ENCODE measurements at regions of chr4 and their contacts with region 1.

Region 1: DNA sequence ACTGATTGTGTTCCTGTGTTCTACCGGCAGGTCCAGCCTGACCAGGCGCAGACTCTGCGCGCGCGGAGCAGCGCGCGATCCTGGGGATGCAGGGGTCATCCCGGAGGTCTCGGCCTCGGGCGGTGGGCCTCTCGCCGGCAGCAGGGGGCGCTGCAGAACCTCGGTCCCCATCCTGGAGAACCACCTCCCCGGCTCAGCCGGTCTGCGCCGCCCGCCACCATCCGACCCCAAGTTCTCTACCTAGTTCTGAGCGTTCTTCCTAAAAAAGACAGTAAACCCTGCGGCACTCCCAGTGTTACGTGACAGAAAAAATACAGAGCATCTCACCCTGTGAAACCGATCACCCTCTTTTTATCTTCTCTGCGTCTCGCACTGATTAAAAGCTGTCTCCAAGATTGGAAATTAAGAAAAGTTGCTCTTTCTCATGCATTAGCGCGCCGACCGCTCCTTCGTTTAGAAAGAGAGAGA is 1.6 kb downstream of the TRPC3 start:
- DNase-seq: peak; percentile 91
- ATAC-seq: peak; percentile 89
- H3K4me3 Mint-ChIP-seq: peak overlapping the region; percentile 86
- H3K27ac Mint-ChIP-seq: no peak overlapping the region
- H3K4me1 Mint-ChIP-seq: peaks cover 9% of the 10 kb centered on the region
- H3K27me3 Mint-ChIP-seq: peaks cover 43% of the 10 kb centered on the region
- CTCF ChIP-seq: peak; percentile 81

Region 2: DNA sequence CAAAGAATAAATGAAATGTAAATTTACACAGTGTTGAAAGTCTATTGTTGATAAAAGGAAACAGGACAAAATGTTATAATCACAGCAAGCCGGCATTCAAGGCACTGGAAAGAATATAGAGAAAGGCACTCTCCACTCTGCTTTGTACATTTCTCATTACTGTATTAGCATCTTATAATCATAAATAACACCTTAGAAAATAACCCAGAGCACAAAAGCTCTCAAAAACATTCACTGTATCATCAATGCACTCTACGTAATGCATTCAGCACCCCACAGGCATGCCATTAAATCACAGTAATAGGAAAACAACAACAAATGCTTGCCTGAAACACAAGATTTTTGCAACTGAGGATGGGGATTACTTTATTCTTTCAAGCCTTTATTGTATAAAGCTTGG is 77.0 kb after region 1 on chr4:
- CTCF ChIA-PET with region 1: no interaction called
- POLR2A ChIA-PET with region 1: no interaction called
- intact Hi-C with region 1: no loop called
- DNase-seq: no peak
- ATAC-seq: no peak
- H3K4me3 Mint-ChIP-seq: no peak overlapping the region
- H3K27ac Mint-ChIP-seq: no peak overlapping the region
- H3K4me1 Mint-ChIP-seq: no peaks in the 10 kb centered on the region
- H3K27me3 Mint-ChIP-seq: peaks cover 3% of the 10 kb centered on the region
- CTCF ChIP-seq: no peak

Region 3: GRCh38 chr4:122151982-122152710 is 201.9 kb after region 1 on chr4 and contains the start of gene BLTP1:
- CTCF ChIA-PET with region 1: no interaction called
- POLR2A ChIA-PET with region 1: no interaction called
- intact Hi-C with region 1: loop called (anchors 5 kb)
- DNase-seq: peak; percentile 87
- ATAC-seq: peak; percentile 94
- H3K4me3 Mint-ChIP-seq: peak within 1 kb of the TSS; percentile 81
- H3K27ac Mint-ChIP-seq: peak within 1 kb of the TSS; percentile 95
- H3K4me1 Mint-ChIP-seq: peaks cover 55% of the 10 kb centered on the region
- H3K27me3 Mint-ChIP-seq: no peaks in the 10 kb centered on the region
- CTCF ChIP-seq: no peak
- total RNA-seq, gene BLTP1: 17.9 to 19.0 TPM

Region 4: DNA sequence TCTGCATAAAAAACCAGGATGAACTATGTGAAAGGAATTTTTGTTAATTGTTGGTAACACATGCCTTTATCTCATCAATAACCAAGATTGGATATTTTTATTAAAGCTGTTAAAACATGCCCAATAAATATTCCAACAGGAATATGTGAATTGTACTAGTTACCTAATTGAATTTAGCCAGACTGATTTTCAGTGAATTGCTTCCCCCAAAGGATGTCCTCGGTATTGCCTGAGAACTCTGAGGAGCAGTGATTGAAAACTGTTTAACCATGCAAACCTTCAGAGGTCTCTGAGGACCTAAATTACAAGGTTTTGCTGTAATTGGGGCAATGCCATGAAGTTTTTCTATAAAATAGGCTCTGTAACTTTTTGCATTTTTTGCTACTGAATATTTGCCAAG is 268.5 kb after region 1 on chr4:
- CTCF ChIA-PET with region 1: interaction called, 12 read pairs
- POLR2A ChIA-PET with region 1: no interaction called
- intact Hi-C with region 1: no loop called
- DNase-seq: no peak
- ATAC-seq: no peak
- H3K4me3 Mint-ChIP-seq: no peak overlapping the region
- H3K27ac Mint-ChIP-seq: no peak overlapping the region
- H3K4me1 Mint-ChIP-seq: no peaks in the 10 kb centered on the region
- H3K27me3 Mint-ChIP-seq: no peaks in the 10 kb centered on the region
- CTCF ChIP-seq: peak; percentile 51

Measured in activated CD8-positive, alpha-beta T cell treated with anti-CD3 and anti-CD28 coated beads for 36 hours (primary cell).